Motor neuron (in vitro differentiated cells): ENCODE measurements at regions of chr2 and their contacts with region 1.

Region 1: GRCh38 chr2:120174963-120175581 is 48.1 kb downstream of the TMEM185B start:
- ATAC-seq: peak in 4 of 8 experiments; percentile 41 to 49 (median 44)
- H3K4me3 ChIP-seq: no peak overlapping the region
- H3K27ac ChIP-seq: no peak overlapping the region
- H3K4me1 ChIP-seq: peaks cover 0 to 3% of the 10 kb centered on the region in 2 donors

Region 2: DNA sequence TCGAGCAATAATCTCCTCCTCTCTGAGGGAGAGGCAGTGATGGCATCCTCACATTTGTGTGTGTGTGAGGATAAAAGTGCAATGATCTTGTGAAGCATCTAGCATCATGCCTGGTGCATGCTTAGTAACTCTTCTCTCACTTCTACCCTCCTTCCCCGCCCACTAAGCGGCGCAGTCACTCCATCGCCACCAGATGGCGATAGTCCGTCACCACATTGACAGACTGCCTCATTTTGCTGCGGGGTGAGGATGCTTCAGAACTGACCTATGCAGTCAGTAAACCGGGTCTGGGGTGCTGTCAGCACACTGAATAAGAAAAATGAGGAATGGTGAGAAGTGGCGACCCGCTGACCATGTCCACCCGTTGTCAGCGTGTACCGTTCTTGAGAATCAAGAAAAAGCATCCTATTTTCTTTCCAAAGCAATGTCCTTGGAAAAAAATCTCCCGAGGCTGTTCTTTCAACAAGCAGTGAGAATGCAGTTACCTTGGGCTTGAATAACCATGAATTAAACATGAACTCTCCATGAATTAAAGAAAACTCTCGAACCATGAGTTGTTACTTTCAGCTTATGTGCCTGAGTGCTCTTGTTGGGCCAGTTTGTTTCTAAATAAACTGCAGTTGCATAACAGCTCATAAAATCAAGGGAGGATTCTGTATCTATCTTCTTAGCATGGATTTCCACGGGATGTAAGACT is 533.4 kb before region 1 on chr2:
- in situ Hi-C with region 1: loop called in 1 of 9 experiments (anchors 25 kb)
- ATAC-seq: peak; percentile 56 to 99 (median 78)
- H3K4me3 ChIP-seq: peak overlapping the region in 4 of 5 donors; percentile 8 to 17 (median 12)
- H3K27ac ChIP-seq: no peak overlapping the region
- H3K4me1 ChIP-seq: peaks cover 18 to 24% of the 10 kb centered on the region in 2 donors

Region 3: GRCh38 chr2:119744298-119744939 is 430.7 kb before region 1 on chr2:
- in situ Hi-C with region 1: loop called in 1 of 9 experiments (anchors 25 kb)
- ATAC-seq: peak in 1 of 8 experiments; percentile 30
- H3K4me3 ChIP-seq: no peak overlapping the region
- H3K27ac ChIP-seq: no peak overlapping the region
- H3K4me1 ChIP-seq: peaks cover 12 to 13% of the 10 kb centered on the region in 2 donors

Region 4: GRCh38 chr2:120109186-120110061 is 65.6 kb before region 1 on chr2:
- in situ Hi-C with region 1: loop called in 1 of 9 experiments (anchors 10 kb)
- ATAC-seq: peak in 4 of 8 experiments; percentile 27 to 69 (median 58)
- H3K4me3 ChIP-seq: no peak overlapping the region
- H3K27ac ChIP-seq: no peak overlapping the region
- H3K4me1 ChIP-seq: peaks cover 0 to 5% of the 10 kb centered on the region in 2 donors